CD4-positive, alpha-beta T cell (primary cell): ENCODE measurements at regions of chr15 and their contacts with region 1.

Region 1: GRCh38 chr15:62254137-62254934 is 89.3 kb upstream of the C2CD4B start:
- DNase-seq: peak; percentile 30 to 70 (median 44)
- ATAC-seq: peak; percentile 44
- H3K4me3 ChIP-seq: no peak overlapping the region
- H3K4me3 Mint-ChIP-seq: no peak overlapping the region
- H3K27ac ChIP-seq: no peak overlapping the region
- H3K27ac Mint-ChIP-seq: no peak overlapping the region
- H3K4me1 ChIP-seq: no peaks in the 10 kb centered on the region
- H3K4me1 Mint-ChIP-seq: no peaks in the 10 kb centered on the region
- H3K27me3 ChIP-seq: no peaks in the 10 kb centered on the region
- H3K27me3 Mint-ChIP-seq: peaks cover 26% of the 10 kb centered on the region
- CTCF ChIP-seq: peak; percentile 63

Region 2: DNA sequence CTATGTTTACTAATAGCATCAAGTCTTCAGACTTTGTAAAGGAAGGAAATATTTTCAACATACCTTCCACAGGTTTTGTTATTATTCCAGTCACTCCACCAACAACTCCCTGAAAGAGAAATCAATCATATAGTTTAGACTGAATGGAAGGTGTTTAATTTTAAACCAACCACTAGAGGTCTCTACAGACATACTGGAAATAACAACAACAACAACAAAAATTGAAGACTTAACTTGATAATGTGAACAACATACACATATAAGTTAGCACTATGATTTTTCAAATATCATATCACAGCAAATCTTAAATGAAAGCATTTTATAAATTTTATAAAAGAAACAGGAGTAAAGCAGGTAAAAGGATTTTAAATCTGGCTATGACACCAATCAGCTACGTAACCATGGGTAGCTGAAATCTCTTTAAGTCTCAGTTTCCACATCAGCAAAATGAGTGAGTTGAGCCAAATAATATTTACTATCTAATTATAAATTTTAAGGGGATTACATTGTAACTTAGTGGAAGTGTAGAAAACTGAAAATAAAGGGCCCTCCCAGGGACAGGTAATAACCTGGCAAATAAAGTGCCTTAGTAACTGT is 382.3 kb before region 1 on chr15:
- CTCF ChIA-PET with region 1: no interaction called
- POLR2A ChIA-PET with region 1: no interaction called
- intact Hi-C with region 1: loop called in 1 of 2 experiments (anchors 5 kb)
- DNase-seq: peak in 3 of 14 experiments; percentile 11 to 39 (median 18)
- ATAC-seq: no peak
- H3K4me3 ChIP-seq: no peak overlapping the region
- H3K4me3 Mint-ChIP-seq: no peak overlapping the region
- H3K27ac ChIP-seq: no peak overlapping the region
- H3K27ac Mint-ChIP-seq: no peak overlapping the region
- H3K4me1 ChIP-seq: no peaks in the 10 kb centered on the region
- H3K4me1 Mint-ChIP-seq: no peaks in the 10 kb centered on the region
- H3K27me3 ChIP-seq: no peaks in the 10 kb centered on the region
- H3K27me3 Mint-ChIP-seq: no peaks in the 10 kb centered on the region
- CTCF ChIP-seq: peak; percentile 61

Region 3: GRCh38 chr15:62306851-62307504 is 52.6 kb after region 1 on chr15:
- CTCF ChIA-PET with region 1: no interaction called
- POLR2A ChIA-PET with region 1: no interaction called
- intact Hi-C with region 1: no loop called
- DNase-seq: peak in 2 of 14 experiments; percentile 1
- ATAC-seq: no peak
- H3K4me3 ChIP-seq: no peak overlapping the region
- H3K4me3 Mint-ChIP-seq: no peak overlapping the region
- H3K27ac ChIP-seq: no peak overlapping the region
- H3K27ac Mint-ChIP-seq: no peak overlapping the region
- H3K4me1 ChIP-seq: no peaks in the 10 kb centered on the region
- H3K4me1 Mint-ChIP-seq: no peaks in the 10 kb centered on the region
- H3K27me3 ChIP-seq: peaks cover 5 to 10% of the 10 kb centered on the region in 2 experiments
- H3K27me3 Mint-ChIP-seq: peaks cover 40% of the 10 kb centered on the region
- CTCF ChIP-seq: peak; percentile 48